ENCODE measurements at regions of chr5 and their contacts with region 1.

Region 1: GRCh38 chr5:59188419-59189225 is 605.7 kb downstream of the RAB3C start:
- DNase-seq: peak; percentile 55 to 68 (median 66)
- H3K4me3 ChIP-seq: no peak overlapping the region
- H3K4me3 Mint-ChIP-seq: peak overlapping the region in 2 of 8 donors; percentile 23 to 58
- H3K27ac ChIP-seq: no peak overlapping the region
- H3K27ac Mint-ChIP-seq: no peak overlapping the region
- H3K4me1 ChIP-seq: peaks cover 5% of the 10 kb centered on the region
- H3K4me1 Mint-ChIP-seq: peaks cover 3 to 5% (median 4%) of the 10 kb centered on the region in 4 donors
- H3K27me3 ChIP-seq: no peaks in the 10 kb centered on the region
- H3K27me3 Mint-ChIP-seq: peaks cover 13 to 15% of the 10 kb centered on the region in 2 donors

Region 2: GRCh38 chr5:59174248-59174844 is 14.3 kb before region 1 on chr5:
- CTCF ChIA-PET with region 1: interaction called, 98 read pairs
- POLR2A ChIA-PET with region 1: no interaction called
- intact Hi-C with region 1: no loop called
- DNase-seq: peak; percentile 51 to 67 (median 57)
- H3K4me3 ChIP-seq: no peak overlapping the region
- H3K4me3 Mint-ChIP-seq: no peak overlapping the region
- H3K27ac ChIP-seq: no peak overlapping the region
- H3K27ac Mint-ChIP-seq: peak overlapping the region in 2 of 7 donors; percentile 5 to 12
- H3K4me1 ChIP-seq: no peaks in the 10 kb centered on the region
- H3K4me1 Mint-ChIP-seq: peaks cover 0 to 4% (median under 1%) of the 10 kb centered on the region in 4 donors
- H3K27me3 ChIP-seq: no peaks in the 10 kb centered on the region
- H3K27me3 Mint-ChIP-seq: no peaks in the 10 kb centered on the region

Region 3: GRCh38 chr5:59209758-59210359 is 21.2 kb after region 1 on chr5:
- CTCF ChIA-PET with region 1: interaction called, 11 read pairs
- POLR2A ChIA-PET with region 1: no interaction called
- intact Hi-C with region 1: no loop called
- DNase-seq: no peak
- H3K4me3 ChIP-seq: no peak overlapping the region
- H3K4me3 Mint-ChIP-seq: no peak overlapping the region
- H3K27ac ChIP-seq: no peak overlapping the region
- H3K27ac Mint-ChIP-seq: no peak overlapping the region
- H3K4me1 ChIP-seq: no peaks in the 10 kb centered on the region
- H3K4me1 Mint-ChIP-seq: no peaks in the 10 kb centered on the region
- H3K27me3 ChIP-seq: no peaks in the 10 kb centered on the region
- H3K27me3 Mint-ChIP-seq: peaks cover 14 to 16% of the 10 kb centered on the region in 2 donors

Region 4: DNA sequence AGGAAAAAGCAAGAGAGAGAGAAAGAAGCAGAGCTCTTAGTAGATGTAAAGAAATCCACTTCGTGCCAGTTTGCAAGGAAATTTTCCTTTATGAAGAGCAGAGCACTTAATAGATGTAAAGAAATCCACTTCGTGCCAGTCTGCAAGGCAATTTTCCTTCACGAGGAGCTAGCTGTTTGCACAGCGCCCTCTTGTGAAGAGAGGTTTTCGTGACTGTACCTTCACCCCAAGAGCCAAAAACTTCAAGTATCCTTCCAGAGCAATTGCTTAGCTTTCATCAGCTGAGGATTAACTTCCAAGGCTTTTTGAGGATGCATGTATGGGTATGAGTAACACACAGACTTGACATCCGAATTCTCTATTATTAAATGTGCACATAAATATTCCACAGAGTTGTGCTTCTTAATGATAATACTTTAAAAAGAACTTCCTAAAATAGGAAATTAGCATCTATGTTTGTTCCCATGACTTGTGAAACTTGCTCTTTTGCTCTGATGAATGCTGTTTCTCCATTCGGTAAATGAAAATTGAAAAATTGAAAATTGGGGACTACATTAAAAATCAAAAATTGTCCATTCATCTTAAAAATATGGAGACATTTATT is 179.3 kb after region 1 on chr5:
- CTCF ChIA-PET with region 1: interaction called, 48 read pairs
- POLR2A ChIA-PET with region 1: no interaction called
- intact Hi-C with region 1: loop called (anchors 1 kb)
- DNase-seq: peak in 4 of 5 donors; percentile 22 to 33 (median 28)
- H3K4me3 ChIP-seq: no peak overlapping the region
- H3K4me3 Mint-ChIP-seq: no peak overlapping the region
- H3K27ac ChIP-seq: no peak overlapping the region
- H3K27ac Mint-ChIP-seq: no peak overlapping the region
- H3K4me1 ChIP-seq: no peaks in the 10 kb centered on the region
- H3K4me1 Mint-ChIP-seq: peaks cover 0 to 2% (median under 1%) of the 10 kb centered on the region in 4 donors
- H3K27me3 ChIP-seq: no peaks in the 10 kb centered on the region
- H3K27me3 Mint-ChIP-seq: peaks cover 11 to 14% of the 10 kb centered on the region in 2 donors

Region 5: DNA sequence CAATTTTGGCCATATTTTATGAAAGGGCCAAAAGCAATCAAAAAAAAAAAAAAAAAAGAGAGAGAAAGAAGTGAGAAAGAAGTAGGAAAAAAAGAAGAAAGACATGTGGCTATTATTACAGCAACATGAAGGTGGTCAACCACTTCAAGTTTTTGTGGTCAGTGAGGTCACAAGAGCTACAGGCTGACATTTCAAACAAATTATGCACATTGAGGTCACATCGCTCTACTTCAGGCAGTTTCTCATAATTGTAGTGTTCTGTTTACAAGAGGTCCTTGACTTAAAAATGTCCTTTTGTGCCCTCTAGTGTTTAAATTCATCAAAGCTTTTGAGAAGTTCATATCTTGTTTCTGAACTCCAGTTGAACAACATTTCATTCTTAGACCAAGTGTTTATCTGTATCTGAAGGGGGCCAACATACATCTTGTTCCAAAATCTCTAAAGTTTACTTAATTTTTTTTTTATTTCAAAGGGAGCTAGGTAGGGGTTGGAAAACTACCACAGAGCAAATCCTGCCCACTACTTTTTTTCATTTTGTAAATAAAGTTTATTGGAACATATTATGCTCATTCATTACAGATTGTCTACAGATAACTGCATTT is 191.8 kb after region 1 on chr5:
- CTCF ChIA-PET with region 1: interaction called, 58 read pairs
- POLR2A ChIA-PET with region 1: interaction called, 3 read pairs
- intact Hi-C with region 1: loop called (anchors 1 kb)
- DNase-seq: peak in 4 of 5 donors; percentile 27 to 41 (median 34)
- H3K4me3 ChIP-seq: no peak overlapping the region
- H3K4me3 Mint-ChIP-seq: no peak overlapping the region
- H3K27ac ChIP-seq: no peak overlapping the region
- H3K27ac Mint-ChIP-seq: no peak overlapping the region
- H3K4me1 ChIP-seq: no peaks in the 10 kb centered on the region
- H3K4me1 Mint-ChIP-seq: peaks cover 0 to 4% (median 3%) of the 10 kb centered on the region in 4 donors
- H3K27me3 ChIP-seq: no peaks in the 10 kb centered on the region
- H3K27me3 Mint-ChIP-seq: peaks cover 0 to 3% of the 10 kb centered on the region in 2 donors

Region 6: GRCh38 chr5:59799668-59800346 is 611.2 kb after region 1 on chr5:
- CTCF ChIA-PET with region 1: interaction called, 18 read pairs
- POLR2A ChIA-PET with region 1: no interaction called
- intact Hi-C with region 1: loop called (anchors 1 kb)
- DNase-seq: peak in 4 of 5 donors; percentile 38 to 45 (median 43)
- H3K4me3 ChIP-seq: no peak overlapping the region
- H3K4me3 Mint-ChIP-seq: no peak overlapping the region
- H3K27ac ChIP-seq: no peak overlapping the region
- H3K27ac Mint-ChIP-seq: no peak overlapping the region
- H3K4me1 ChIP-seq: peaks cover 15% of the 10 kb centered on the region
- H3K4me1 Mint-ChIP-seq: no peaks in the 10 kb centered on the region
- H3K27me3 ChIP-seq: no peaks in the 10 kb centered on the region
- H3K27me3 Mint-ChIP-seq: peaks cover 2 to 3% of the 10 kb centered on the region in 2 donors